WTC11 (cell line): ENCODE measurements at regions of chr3 and their contacts with region 1.

Region 1: DNA sequence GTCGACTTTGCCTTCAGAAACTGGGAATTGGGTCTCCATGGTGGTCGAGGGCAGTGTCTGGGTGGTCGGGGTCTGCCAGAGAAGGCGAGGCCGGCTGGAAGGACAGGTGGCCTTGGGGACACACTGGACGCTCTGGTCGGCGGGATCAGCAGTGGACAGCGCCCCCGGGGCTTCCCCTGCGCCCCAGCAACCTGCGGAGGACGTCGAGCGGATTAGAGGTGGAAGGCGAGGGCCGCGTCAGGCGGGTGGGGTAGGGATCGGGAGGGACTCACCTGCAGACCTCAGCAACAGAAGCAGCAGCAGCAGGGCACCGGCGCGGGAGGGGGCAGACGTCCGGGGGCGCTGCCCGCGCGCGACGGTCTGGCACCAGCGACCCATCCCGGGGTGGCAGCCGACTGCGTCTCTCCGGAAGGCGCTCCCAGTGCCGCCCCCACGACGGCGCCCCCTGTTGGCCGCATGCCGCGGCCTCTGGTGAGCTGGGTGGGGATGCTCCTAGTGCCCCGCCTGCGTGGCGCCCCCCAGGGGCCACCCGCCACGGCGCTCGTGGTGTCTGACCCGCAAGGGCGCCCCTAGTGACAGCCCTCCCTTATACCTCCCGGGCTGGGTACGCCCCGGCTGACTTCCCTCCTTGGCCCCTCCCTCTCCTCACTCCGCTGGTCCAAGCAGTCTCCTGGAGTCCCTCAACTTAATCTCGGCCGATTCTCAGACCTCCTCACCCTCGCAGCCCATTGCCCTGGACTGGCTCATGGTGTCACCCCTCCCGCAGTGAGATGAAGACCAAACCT is at the start of gene PRSS50:
- DNase-seq: peak; percentile 86
- ATAC-seq: peak; percentile 94
- H3K4me3 Mint-ChIP-seq: no peak within 1 kb of the TSS
- H3K27ac Mint-ChIP-seq: no peak within 1 kb of the TSS
- H3K4me1 Mint-ChIP-seq: no peaks in the 10 kb centered on the region
- H3K27me3 Mint-ChIP-seq: no peaks in the 10 kb centered on the region
- CTCF ChIP-seq: peak; percentile 94
- total RNA-seq, gene PRSS50: 0.70 to 1.4 TPM (median 1.2 TPM) in 3 replicates

Region 2: GRCh38 chr3:46566036-46566641 is 151.5 kb before region 1 on chr3 and contains the start of gene LRRC2:
- CTCF ChIA-PET with region 1: no interaction called
- POLR2A ChIA-PET with region 1: no interaction called
- DNase-seq: peak; percentile 62
- ATAC-seq: peak; percentile 80
- H3K4me3 Mint-ChIP-seq: peak within 1 kb of the TSS; percentile 66
- H3K27ac Mint-ChIP-seq: peak within 1 kb of the TSS; percentile 87
- H3K4me1 Mint-ChIP-seq: peaks cover 55% of the 10 kb centered on the region
- H3K27me3 Mint-ChIP-seq: no peaks in the 10 kb centered on the region; the same call in none of the 2 replicates
- CTCF ChIP-seq: no peak
- total RNA-seq, gene LRRC2: 4.0 to 4.9 TPM (median 4.9 TPM) in 3 replicates

Region 3: DNA sequence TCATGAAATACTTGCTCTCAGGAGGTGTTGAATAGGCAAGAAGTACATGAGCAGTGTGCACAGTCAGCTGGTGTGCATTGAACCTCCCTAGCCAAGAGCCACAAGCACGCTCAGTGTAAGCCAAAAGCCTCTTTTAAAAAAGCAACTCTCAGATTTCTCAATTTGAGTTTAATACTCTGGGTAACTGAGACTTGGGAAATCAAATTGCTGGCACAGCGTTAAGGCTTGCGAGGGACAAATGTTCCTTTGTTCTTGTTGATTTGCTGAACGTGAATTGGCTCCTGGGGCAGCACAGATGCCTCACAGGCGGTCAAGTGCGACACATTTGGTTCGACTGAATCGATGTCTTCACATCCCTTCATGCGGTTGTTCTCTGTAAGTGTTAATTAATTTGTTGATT is 105.3 kb before region 1 on chr3 and contains the start of gene FAM240A:
- CTCF ChIA-PET with region 1: no interaction called
- POLR2A ChIA-PET with region 1: no interaction called
- DNase-seq: no peak
- ATAC-seq: no peak
- H3K4me3 Mint-ChIP-seq: no peak within 1 kb of the TSS
- H3K27ac Mint-ChIP-seq: no peak within 1 kb of the TSS
- H3K4me1 Mint-ChIP-seq: peaks cover 44% of the 10 kb centered on the region
- H3K27me3 Mint-ChIP-seq: peaks cover 3% of the 10 kb centered on the region
- CTCF ChIP-seq: no peak
- total RNA-seq, gene FAM240A: 0.09 to 0.14 TPM (median 0.13 TPM) in 3 replicates

Region 4: GRCh38 chr3:46705022-46705530 is 12.6 kb before region 1 on chr3:
- CTCF ChIA-PET with region 1: interaction called, 10 read pairs
- POLR2A ChIA-PET with region 1: no interaction called
- DNase-seq: peak; percentile 83
- ATAC-seq: peak; percentile 78
- H3K4me3 Mint-ChIP-seq: no peak overlapping the region
- H3K27ac Mint-ChIP-seq: no peak overlapping the region
- H3K4me1 Mint-ChIP-seq: peaks cover 11% of the 10 kb centered on the region
- H3K27me3 Mint-ChIP-seq: peaks cover 29% of the 10 kb centered on the region
- CTCF ChIP-seq: peak; percentile 97

Region 5: DNA sequence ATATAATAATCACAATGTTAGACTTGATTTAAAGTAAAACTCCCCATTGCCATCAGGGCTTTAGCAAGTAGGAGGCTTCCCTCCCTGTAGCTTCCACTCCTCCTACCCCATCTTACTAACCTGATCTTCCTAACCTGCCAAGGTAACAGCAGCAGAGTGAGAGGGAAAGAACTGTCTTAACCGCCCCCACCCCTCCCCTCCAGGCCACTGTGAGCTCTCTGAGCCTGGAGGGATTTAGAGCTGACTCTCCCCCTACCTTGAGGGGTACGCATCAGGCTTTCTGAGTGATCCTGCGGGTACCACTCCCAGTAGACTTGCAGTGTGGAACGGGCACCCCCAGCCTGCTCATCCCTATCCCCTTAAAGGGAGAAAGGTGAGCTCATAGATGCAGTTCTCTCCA is 11.4 kb after region 1 on chr3:
- CTCF ChIA-PET with region 1: interaction called, 10 read pairs
- POLR2A ChIA-PET with region 1: no interaction called
- DNase-seq: no peak
- ATAC-seq: no peak; the same call in 1 of the 2 replicates
- H3K4me3 Mint-ChIP-seq: no peak overlapping the region
- H3K27ac Mint-ChIP-seq: no peak overlapping the region
- H3K4me1 Mint-ChIP-seq: peaks cover 21% of the 10 kb centered on the region
- H3K27me3 Mint-ChIP-seq: no peaks in the 10 kb centered on the region; the same call in 1 of the 2 replicates
- CTCF ChIP-seq: no peak